HepG2 (cell line): ENCODE measurements at regions of chr12 and their contacts with region 1.

Region 1: GRCh38 chr12:14007639-14008038 is 26.2 kb upstream of the GRIN2B start:
- DNase-seq: no peak
- ATAC-seq: no peak
- H3K4me3 ChIP-seq: no peak overlapping the region
- H3K27ac ChIP-seq: no peak overlapping the region
- H3K4me1 ChIP-seq: no peaks in the 10 kb centered on the region
- H3K27me3 ChIP-seq: no peaks in the 10 kb centered on the region
- CTCF ChIP-seq: no peak
- EP300 ChIP-seq: no peak
- POLR2A ChIP-seq: no peak
- RAD21 ChIP-seq: no peak

Region 2: GRCh38 chr12:14086838-14087237 is 79.2 kb after region 1 on chr12:
- CTCF ChIA-PET with region 1: no interaction called
- POLR2A ChIA-PET with region 1: no interaction called
- in situ Hi-C with region 1: no loop called
- intact Hi-C with region 1: loop called (anchors 2 kb)
- DNase-seq: no peak
- ATAC-seq: no peak
- H3K4me3 ChIP-seq: no peak overlapping the region
- H3K27ac ChIP-seq: no peak overlapping the region
- H3K4me1 ChIP-seq: no peaks in the 10 kb centered on the region
- H3K27me3 ChIP-seq: no peaks in the 10 kb centered on the region
- CTCF ChIP-seq: no peak
- EP300 ChIP-seq: no peak
- POLR2A ChIP-seq: no peak
- RAD21 ChIP-seq: no peak